OCI-LY7 (cell line): ENCODE measurements at regions of chr2 and their contacts with region 1.

Region 1: GRCh38 chr2:214960677-214961076 is 151.2 kb upstream of the BARD1 start:
- DNase-seq: peak; percentile 3
- H3K4me3 ChIP-seq: no peak overlapping the region
- H3K27ac ChIP-seq: no peak overlapping the region
- H3K4me1 ChIP-seq: no peaks in the 10 kb centered on the region
- CTCF ChIP-seq: peak; percentile 63

Region 2: GRCh38 chr2:214575030-214575939 is 385.4 kb before region 1 on chr2:
- CTCF ChIA-PET with region 1: no interaction called
- POLR2A ChIA-PET with region 1: no interaction called
- intact Hi-C with region 1: no loop called
- DNase-seq: no peak
- H3K4me3 ChIP-seq: no peak overlapping the region
- H3K27ac ChIP-seq: no peak overlapping the region
- H3K4me1 ChIP-seq: no peaks in the 10 kb centered on the region
- CTCF ChIP-seq: no peak

Region 3: GRCh38 chr2:214865363-214865762 is 95.3 kb before region 1 on chr2:
- CTCF ChIA-PET with region 1: no interaction called
- POLR2A ChIA-PET with region 1: no interaction called
- intact Hi-C with region 1: no loop called
- DNase-seq: no peak
- H3K4me3 ChIP-seq: no peak overlapping the region
- H3K27ac ChIP-seq: no peak overlapping the region
- H3K4me1 ChIP-seq: no peaks in the 10 kb centered on the region
- CTCF ChIP-seq: no peak

Region 4: GRCh38 chr2:215071667-215072066 is 111.0 kb after region 1 on chr2:
- CTCF ChIA-PET with region 1: no interaction called
- POLR2A ChIA-PET with region 1: no interaction called
- intact Hi-C with region 1: no loop called
- DNase-seq: no peak
- H3K4me3 ChIP-seq: no peak overlapping the region
- H3K27ac ChIP-seq: no peak overlapping the region
- H3K4me1 ChIP-seq: no peaks in the 10 kb centered on the region
- CTCF ChIP-seq: no peak

Region 5: DNA sequence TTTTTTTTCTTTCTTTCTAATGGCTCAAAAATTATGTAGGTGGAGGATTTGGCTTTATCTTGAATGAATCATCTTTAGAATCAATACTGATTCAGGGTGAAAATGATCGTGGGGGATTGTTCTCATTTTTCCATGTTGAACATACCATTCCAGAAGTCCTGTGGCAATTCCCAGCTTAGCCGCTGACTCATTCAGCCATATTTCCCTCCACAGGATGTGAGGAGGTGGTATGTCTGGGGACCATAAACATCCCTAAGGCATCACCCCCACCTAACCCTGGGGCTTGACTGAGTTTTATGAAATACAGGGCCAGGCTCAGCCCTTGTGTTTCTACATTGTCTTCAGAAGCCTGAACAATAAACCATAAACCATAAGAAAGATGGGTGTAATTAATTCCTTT is 567.9 kb after region 1 on chr2:
- CTCF ChIA-PET with region 1: no interaction called
- POLR2A ChIA-PET with region 1: interaction called, 11 read pairs
- intact Hi-C with region 1: no loop called
- DNase-seq: no peak
- H3K4me3 ChIP-seq: no peak overlapping the region
- H3K27ac ChIP-seq: no peak overlapping the region
- H3K4me1 ChIP-seq: no peaks in the 10 kb centered on the region
- CTCF ChIP-seq: no peak